CD4-positive, alpha-beta memory T cell (primary cell): ENCODE measurements at regions of chr22 and their contacts with region 1.

Region 1: DNA sequence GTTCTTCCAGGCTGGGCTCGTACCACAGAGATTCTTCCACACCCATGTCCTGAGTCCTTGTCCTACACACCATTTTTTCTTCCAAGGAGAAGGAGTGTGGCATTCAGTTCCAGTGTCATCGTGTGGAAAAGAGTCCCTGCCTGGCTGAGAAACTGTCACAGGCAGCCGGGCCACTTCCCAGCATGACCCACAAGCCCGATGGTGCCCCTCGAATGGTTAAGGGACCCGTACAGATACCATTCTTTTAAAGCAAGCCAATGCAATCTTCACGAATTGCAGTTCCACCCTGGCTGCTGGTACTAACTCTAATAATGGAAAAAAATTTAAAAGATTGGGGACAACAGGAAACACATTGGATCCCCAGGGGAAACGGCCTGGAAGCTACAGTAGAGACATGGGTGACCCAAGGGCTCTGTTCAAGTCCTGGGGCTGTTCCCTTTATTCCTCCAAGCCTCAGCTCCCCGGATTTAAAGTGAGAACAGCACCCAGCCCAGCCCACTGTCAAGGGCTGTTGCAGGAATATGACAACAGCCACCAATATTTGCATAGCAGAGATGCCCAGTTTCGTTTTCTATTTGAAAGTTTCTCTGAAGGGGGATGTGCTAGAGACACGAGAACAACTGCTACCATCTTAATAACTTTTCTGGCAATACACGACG is 80.9 kb upstream of the WNT7B start:
- DNase-seq: peak; percentile 33 to 57 (median 43)
- H3K4me3 ChIP-seq: no peak overlapping the region
- H3K4me3 Mint-ChIP-seq: peak overlapping the region; percentile 17 to 87 (median 60)
- H3K27ac ChIP-seq: peak overlapping the region; percentile 65
- H3K27ac Mint-ChIP-seq: peak overlapping the region; percentile 10 to 93 (median 84)
- H3K4me1 ChIP-seq: peaks cover 57% of the 10 kb centered on the region
- H3K4me1 Mint-ChIP-seq: peaks cover 15 to 61% (median 40%) of the 10 kb centered on the region in 4 donors
- H3K27me3 ChIP-seq: no peaks in the 10 kb centered on the region
- H3K27me3 Mint-ChIP-seq: no peaks in the 10 kb centered on the region

Region 2: GRCh38 chr22:46044621-46045438 is 13.1 kb before region 1 on chr22:
- CTCF ChIA-PET with region 1: interaction called, 3 read pairs
- POLR2A ChIA-PET with region 1: interaction called, 56 read pairs
- intact Hi-C with region 1: no loop called
- DNase-seq: peak in 3 of 5 donors; percentile 24 to 37 (median 28)
- H3K4me3 ChIP-seq: peak overlapping the region; percentile 29 to 64
- H3K4me3 Mint-ChIP-seq: peak overlapping the region; percentile 83 to 94 (median 85)
- H3K27ac ChIP-seq: peak overlapping the region; percentile 54
- H3K27ac Mint-ChIP-seq: peak overlapping the region; percentile 85 to 94 (median 90)
- H3K4me1 ChIP-seq: peaks cover 45% of the 10 kb centered on the region
- H3K4me1 Mint-ChIP-seq: peaks cover 1 to 32% (median 21%) of the 10 kb centered on the region in 4 donors
- H3K27me3 ChIP-seq: no peaks in the 10 kb centered on the region
- H3K27me3 Mint-ChIP-seq: no peaks in the 10 kb centered on the region

Region 3: GRCh38 chr22:46071451-46072109 is 13.7 kb after region 1 on chr22:
- CTCF ChIA-PET with region 1: no interaction called
- POLR2A ChIA-PET with region 1: interaction called, 41 read pairs
- intact Hi-C with region 1: loop called (anchors 1 kb)
- DNase-seq: peak; percentile 44 to 75 (median 50)
- H3K4me3 ChIP-seq: peak overlapping the region in 1 of 2 donors; percentile 66
- H3K4me3 Mint-ChIP-seq: peak overlapping the region; percentile 76 to 90 (median 82)
- H3K27ac ChIP-seq: peak overlapping the region; percentile 31
- H3K27ac Mint-ChIP-seq: peak overlapping the region in 4 of 7 donors; percentile 70 to 80 (median 75)
- H3K4me1 ChIP-seq: peaks cover 56% of the 10 kb centered on the region
- H3K4me1 Mint-ChIP-seq: peaks cover 10 to 58% (median 46%) of the 10 kb centered on the region in 4 donors
- H3K27me3 ChIP-seq: no peaks in the 10 kb centered on the region
- H3K27me3 Mint-ChIP-seq: no peaks in the 10 kb centered on the region